K562 (cell line): ENCODE measurements at regions of chr18 and their contacts with region 1.

Region 1: GRCh38 chr18:25230658-25231326 is 121.2 kb downstream of the ZNF521 start:
- DNase-seq: no peak
- ATAC-seq: no peak; the same call in 2 of the 3 replicates
- H3K4me3 ChIP-seq: no peak overlapping the region
- H3K27ac ChIP-seq: no peak overlapping the region
- H3K4me1 ChIP-seq: no peaks in the 10 kb centered on the region; a peak in 2 of 5 replicates
- H3K27me3 ChIP-seq: no peaks in the 10 kb centered on the region
- CTCF ChIP-seq: no peak
- EP300 ChIP-seq: no peak
- POLR2A ChIP-seq: no peak
- RAD21 ChIP-seq: no peak

Region 2: DNA sequence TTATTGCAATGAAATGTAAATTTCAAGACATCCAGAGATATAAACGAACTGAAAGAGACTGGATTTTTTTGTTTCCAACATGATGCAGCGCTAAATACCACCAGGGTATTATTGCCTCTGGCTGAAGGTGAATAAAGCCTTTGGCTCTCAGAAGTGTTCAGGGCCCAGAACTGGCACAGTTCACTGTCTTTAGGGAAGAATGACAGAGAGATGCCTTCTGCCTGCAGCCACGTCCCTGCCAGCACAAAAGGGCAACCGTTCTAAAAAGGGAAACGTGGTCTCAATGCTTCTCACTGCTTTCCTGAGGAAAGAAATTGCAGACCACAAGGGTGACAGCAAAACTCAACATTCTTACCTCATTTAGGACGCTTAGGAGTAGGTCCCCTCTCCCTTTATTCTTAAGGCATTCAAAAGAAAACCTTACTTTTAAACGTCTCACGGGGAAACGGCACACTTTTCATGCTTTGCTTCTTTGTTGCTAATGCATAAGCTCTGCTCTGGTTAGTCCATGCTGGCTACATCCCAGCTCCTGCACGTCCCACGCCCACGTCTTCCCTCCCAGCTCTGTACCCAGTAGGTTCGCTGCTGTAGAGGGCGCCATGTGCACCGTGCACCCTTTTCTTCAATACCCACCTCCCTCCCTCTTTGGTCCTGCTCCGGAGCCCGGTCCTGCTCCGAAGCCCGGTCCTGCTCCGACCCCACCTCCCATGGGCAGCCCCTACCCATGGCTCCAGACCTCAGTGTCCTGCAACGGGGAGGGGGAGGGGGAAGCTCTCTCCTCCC is 599.4 kb before region 1 on chr18:
- CTCF ChIA-PET with region 1: no interaction called
- POLR2A ChIA-PET with region 1: no interaction called
- in situ Hi-C with region 1: no loop called
- intact Hi-C with region 1: no loop called
- DNase-seq: no peak
- ATAC-seq: peak; percentile 51; the same call in 1 of the 3 replicates
- H3K4me3 ChIP-seq: no peak overlapping the region
- H3K27ac ChIP-seq: no peak overlapping the region
- H3K4me1 ChIP-seq: no peaks in the 10 kb centered on the region
- H3K27me3 ChIP-seq: no peaks in the 10 kb centered on the region; a peak in 1 of 5 replicates
- CTCF ChIP-seq: no peak
- EP300 ChIP-seq: no peak
- POLR2A ChIP-seq: no peak
- RAD21 ChIP-seq: no peak

Region 3: DNA sequence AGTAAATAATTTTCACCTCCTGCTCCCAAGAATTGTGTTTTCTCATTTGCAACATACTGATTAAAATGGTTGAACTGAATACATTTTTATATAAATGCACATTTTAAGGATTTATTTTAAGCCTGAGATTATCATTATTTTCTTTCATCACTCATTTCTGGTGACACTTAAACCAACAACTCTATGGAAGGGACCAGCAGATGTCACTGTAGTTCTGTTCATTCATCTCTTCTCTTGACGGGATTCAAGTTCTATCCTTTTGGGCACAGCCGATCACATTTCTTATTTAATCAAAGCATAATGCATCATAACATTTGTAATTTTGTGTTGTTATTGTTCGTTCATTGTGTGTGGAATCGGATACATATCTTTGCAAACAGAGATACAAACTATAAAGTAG is 352.5 kb before region 1 on chr18:
- CTCF ChIA-PET with region 1: no interaction called
- POLR2A ChIA-PET with region 1: no interaction called
- in situ Hi-C with region 1: no loop called
- intact Hi-C with region 1: loop called (anchors 10 kb)
- DNase-seq: peak in 1 of 4 experiments; percentile 28
- ATAC-seq: no peak
- H3K4me3 ChIP-seq: no peak overlapping the region
- H3K27ac ChIP-seq: no peak overlapping the region
- H3K4me1 ChIP-seq: no peaks in the 10 kb centered on the region
- H3K27me3 ChIP-seq: no peaks in the 10 kb centered on the region
- CTCF ChIP-seq: peak in 2 of 3 experiments; percentile 35 to 36; a peak in 1 of 6 replicates
- EP300 ChIP-seq: no peak
- POLR2A ChIP-seq: no peak
- RAD21 ChIP-seq: peak; percentile 57 to 59